Colonic mucosa (tissue), 4 donors: ENCODE measurements at regions of chr3 and their contacts with region 1.

Region 1: GRCh38 chr3:195727606-195728195 is 6.9 kb downstream of the MUC20 start:
- DNase-seq: no peak
- H3K4me3 ChIP-seq: no peak overlapping the region
- H3K27ac ChIP-seq: peak overlapping the region; percentile 81
- H3K4me1 ChIP-seq: peaks cover 10% of the 10 kb centered on the region
- H3K27me3 ChIP-seq: no peaks in the 10 kb centered on the region
- CTCF ChIP-seq: no peak

Region 2: GRCh38 chr3:195558602-195559001 is 169.1 kb before region 1 on chr3:
- intact Hi-C with region 1: no loop called
- DNase-seq: peak; percentile 76
- H3K4me3 ChIP-seq: no peak overlapping the region
- H3K27ac ChIP-seq: no peak overlapping the region
- H3K4me1 ChIP-seq: no peaks in the 10 kb centered on the region
- H3K27me3 ChIP-seq: no peaks in the 10 kb centered on the region
- CTCF ChIP-seq: peak; percentile 47

Region 3: GRCh38 chr3:195616712-195617086 is 111.0 kb before region 1 on chr3:
- intact Hi-C with region 1: loop called (anchors 5 kb)
- DNase-seq: peak; percentile 28
- H3K4me3 ChIP-seq: no peak overlapping the region
- H3K27ac ChIP-seq: no peak overlapping the region
- H3K4me1 ChIP-seq: no peaks in the 10 kb centered on the region
- H3K27me3 ChIP-seq: no peaks in the 10 kb centered on the region
- CTCF ChIP-seq: no peak

Region 4: GRCh38 chr3:195794708-195795107 is 67.0 kb after region 1 on chr3:
- intact Hi-C with region 1: no loop called
- DNase-seq: no peak
- H3K4me3 ChIP-seq: no peak overlapping the region
- H3K27ac ChIP-seq: no peak overlapping the region
- H3K4me1 ChIP-seq: no peaks in the 10 kb centered on the region
- H3K27me3 ChIP-seq: no peaks in the 10 kb centered on the region
- CTCF ChIP-seq: no peak